ENCODE measurements at regions of chr13 and their contacts with region 1.

Region 1: DNA sequence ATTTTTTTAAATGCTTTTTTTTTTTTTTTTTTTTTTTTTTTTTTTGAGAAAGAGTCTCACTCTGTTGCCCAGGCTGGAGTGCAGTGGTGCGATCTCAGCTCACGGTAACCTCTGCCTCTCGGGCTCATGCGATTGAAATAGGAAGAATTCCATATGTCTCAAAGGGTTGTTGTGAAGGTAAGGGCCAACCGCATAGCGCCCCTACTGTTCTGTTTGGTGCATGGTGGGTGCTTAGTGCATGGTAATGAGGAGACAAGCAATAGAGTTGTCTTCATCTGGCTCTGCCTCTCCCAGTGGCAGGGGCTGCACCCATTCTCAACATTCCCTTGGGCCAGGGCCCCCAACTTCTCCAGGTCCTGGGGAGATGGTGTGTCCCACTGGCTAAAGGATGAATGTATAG is 68.7 kb downstream of the RASL11A start:
- DNase-seq: no peak
- H3K4me3 ChIP-seq: no peak overlapping the region
- H3K27ac ChIP-seq: no peak overlapping the region
- H3K4me1 ChIP-seq: no peaks in the 10 kb centered on the region
- H3K27me3 ChIP-seq: no peaks in the 10 kb centered on the region
- CTCF ChIP-seq: no peak
- POLR2A ChIP-seq: no peak

Region 2: DNA sequence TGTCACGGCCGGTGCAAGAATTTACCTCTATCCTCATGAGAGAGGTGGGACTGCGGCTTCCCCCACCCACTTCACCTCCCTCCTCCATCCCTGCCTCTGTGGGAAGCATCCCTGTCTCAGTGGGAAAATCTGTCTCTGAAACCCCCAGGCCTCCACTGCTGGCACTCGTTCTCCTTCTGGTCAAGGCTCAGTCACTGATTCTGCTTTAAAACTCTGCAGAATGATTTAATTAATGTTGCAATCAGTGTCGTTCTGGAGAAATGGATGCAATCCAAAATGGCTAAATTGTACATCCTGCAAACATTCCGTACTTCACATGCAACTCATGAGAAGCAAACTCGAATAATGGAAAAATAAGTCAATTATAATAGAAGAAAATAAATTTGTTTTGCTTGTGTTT is 63.1 kb before region 1 on chr13:
- intact Hi-C with region 1: loop called (anchors 5 kb)
- DNase-seq: no peak
- H3K4me3 ChIP-seq: no peak overlapping the region
- H3K27ac ChIP-seq: no peak overlapping the region
- H3K4me1 ChIP-seq: peaks cover 2% of the 10 kb centered on the region
- H3K27me3 ChIP-seq: no peaks in the 10 kb centered on the region
- CTCF ChIP-seq: no peak
- POLR2A ChIP-seq: no peak

Measured in prostate gland (tissue), 2 donors.